Activated CD4-positive, alpha-beta T cell treated with anti-CD3 and anti-CD28 coated beads, Interleukin-2, amount 10 ng/mL, durations not matched to agents 24 days and 14 days (primary cell): ENCODE measurements at regions of chr12 and their contacts with region 1.

Region 1: GRCh38 chr12:106302401-106303201 is at the start of gene TCP11L2:
- DNase-seq: peak; percentile 97
- H3K4me3 Mint-ChIP-seq: peak within 1 kb of the TSS; percentile 97
- H3K27ac Mint-ChIP-seq: peak within 1 kb of the TSS; percentile 100
- H3K4me1 Mint-ChIP-seq: peaks cover 38% of the 10 kb centered on the region
- H3K27me3 Mint-ChIP-seq: no peaks in the 10 kb centered on the region
- total RNA-seq, gene TCP11L2: 3.2 and 4.5 TPM in 2 replicates

Region 2: DNA sequence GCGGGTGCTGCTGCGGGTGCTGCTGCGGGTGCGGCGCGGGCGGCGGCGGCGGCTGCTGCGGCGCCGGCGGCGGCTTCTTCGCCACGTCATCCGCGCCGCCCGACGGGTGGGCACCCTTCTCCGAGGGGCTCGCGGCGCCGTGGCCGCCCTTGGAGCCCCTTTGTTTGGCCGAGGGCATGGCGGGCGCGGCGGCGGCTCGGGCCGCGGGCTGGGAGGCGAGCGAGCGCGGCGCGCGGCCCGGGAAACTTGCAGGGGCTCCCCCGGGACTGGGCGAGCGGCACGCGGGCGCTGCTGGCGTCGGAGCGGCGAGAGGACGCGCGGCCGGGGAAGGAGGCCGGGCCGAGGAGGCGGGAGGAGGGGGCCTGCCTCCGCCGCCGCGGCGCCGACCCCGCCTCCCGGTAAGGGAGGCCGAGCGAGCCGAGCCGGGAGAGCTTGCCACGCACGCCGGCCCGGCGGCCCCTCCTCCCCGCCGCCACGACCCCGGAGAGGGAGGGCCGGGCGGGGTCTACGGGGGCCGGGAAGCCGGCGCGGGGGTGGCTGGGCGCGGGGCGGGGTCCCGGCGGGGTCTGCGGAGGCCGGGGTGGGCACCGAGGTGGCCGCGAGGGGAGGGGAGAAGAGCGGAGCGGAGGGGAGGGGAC is 54.8 kb before region 1 on chr12 and contains the start of gene CKAP4:
- intact Hi-C with region 1: loop called (anchors 2 kb)
- DNase-seq: peak; percentile 85
- H3K4me3 Mint-ChIP-seq: peak within 1 kb of the TSS; percentile 78
- H3K27ac Mint-ChIP-seq: peak within 1 kb of the TSS; percentile 62
- H3K4me1 Mint-ChIP-seq: peaks cover 9% of the 10 kb centered on the region
- H3K27me3 Mint-ChIP-seq: peaks cover 12% of the 10 kb centered on the region
- total RNA-seq, gene CKAP4: 6.7 and 7.7 TPM in 2 replicates

Region 3: GRCh38 chr12:106774005-106774807 is 471.6 kb after region 1 on chr12 and contains the start of gene RIC8B:
- intact Hi-C with region 1: loop called (anchors 5 kb)
- DNase-seq: peak; percentile 95
- H3K4me3 Mint-ChIP-seq: peak within 1 kb of the TSS; percentile 98
- H3K27ac Mint-ChIP-seq: peak within 1 kb of the TSS; percentile 96
- H3K4me1 Mint-ChIP-seq: peaks cover 32% of the 10 kb centered on the region
- H3K27me3 Mint-ChIP-seq: peaks cover 2% of the 10 kb centered on the region
- total RNA-seq, gene RIC8B: 13.6 and 14.9 TPM in 2 replicates